K562 (cell line): ENCODE measurements at regions of chr2 and their contacts with region 1.

Region 1: GRCh38 chr2:11967946-11968465 is 221.6 kb downstream of the LPIN1 start:
- DNase-seq: peak; percentile 86 to 99 (median 92)
- ATAC-seq: peak; percentile 99
- H3K4me3 ChIP-seq: no peak overlapping the region
- H3K27ac ChIP-seq: peak overlapping the region; percentile 62
- H3K4me1 ChIP-seq: peaks cover 4 to 25% of the 10 kb centered on the region in 2 experiments; a peak in 4 of 5 replicates
- H3K27me3 ChIP-seq: no peaks in the 10 kb centered on the region
- CTCF ChIP-seq: no peak; a peak in 1 of 6 replicates
- EP300 ChIP-seq: peak; percentile 99
- POLR2A ChIP-seq: no peak
- RAD21 ChIP-seq: peak; percentile 44 to 55

Region 2: DNA sequence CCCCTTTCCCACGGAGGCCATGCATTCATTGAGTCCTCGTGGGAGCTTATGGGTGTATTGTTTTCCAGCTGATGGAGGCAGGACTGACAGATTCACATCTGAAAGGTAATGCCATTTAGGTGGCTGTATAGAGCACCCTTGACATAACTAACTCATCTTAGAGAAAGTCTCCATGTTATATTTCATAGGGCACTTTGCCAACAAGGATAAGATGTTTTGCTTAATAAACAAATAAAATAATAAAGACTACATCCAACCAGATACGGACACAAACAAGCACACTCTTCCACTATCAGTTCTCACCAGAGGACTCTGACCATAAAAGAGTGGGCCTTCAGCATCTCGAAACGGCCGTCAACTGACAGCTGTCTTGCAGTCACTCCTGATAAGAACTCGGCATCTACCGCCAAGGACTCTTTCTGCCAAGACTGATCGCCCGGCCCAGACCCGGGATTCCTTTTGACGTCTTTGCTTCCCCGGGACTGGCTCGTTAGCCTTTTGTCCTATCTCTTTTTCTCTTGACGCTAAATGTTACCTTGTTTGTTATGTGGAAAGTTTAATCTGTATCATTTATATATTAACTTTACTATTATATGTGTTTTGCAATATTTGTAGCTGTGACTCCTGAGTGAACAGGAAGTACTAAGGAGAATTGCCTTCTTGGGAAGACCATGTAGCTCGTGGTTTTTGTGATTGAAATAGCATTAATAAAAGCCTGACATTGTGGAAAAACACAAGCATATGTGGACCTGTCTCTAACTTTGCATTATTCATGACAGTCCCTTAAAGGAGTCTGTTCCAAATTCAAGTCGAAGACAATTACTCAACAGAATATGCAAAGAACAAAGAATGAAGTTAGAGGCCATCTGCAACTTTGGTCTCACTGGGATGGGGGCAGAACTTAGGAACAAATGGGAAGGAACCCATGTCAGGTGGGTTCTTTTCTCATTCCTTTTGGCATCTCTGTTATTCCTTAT is 26.5 kb before region 1 on chr2:
- CTCF ChIA-PET with region 1: no interaction called
- POLR2A ChIA-PET with region 1: interaction called, 9 read pairs
- in situ Hi-C with region 1: no loop called
- intact Hi-C with region 1: loop called (anchors 1 kb)
- DNase-seq: peak; percentile 85 to 95 (median 91)
- ATAC-seq: peak; percentile 95
- H3K4me3 ChIP-seq: no peak overlapping the region
- H3K27ac ChIP-seq: peak overlapping the region; percentile 74
- H3K4me1 ChIP-seq: peaks cover 9 to 44% of the 10 kb centered on the region in 2 experiments
- H3K27me3 ChIP-seq: no peaks in the 10 kb centered on the region
- CTCF ChIP-seq: no peak
- EP300 ChIP-seq: peak; percentile 99
- POLR2A ChIP-seq: no peak
- RAD21 ChIP-seq: peak; percentile 31 to 32; a peak in 3 of 4 replicates

Region 3: DNA sequence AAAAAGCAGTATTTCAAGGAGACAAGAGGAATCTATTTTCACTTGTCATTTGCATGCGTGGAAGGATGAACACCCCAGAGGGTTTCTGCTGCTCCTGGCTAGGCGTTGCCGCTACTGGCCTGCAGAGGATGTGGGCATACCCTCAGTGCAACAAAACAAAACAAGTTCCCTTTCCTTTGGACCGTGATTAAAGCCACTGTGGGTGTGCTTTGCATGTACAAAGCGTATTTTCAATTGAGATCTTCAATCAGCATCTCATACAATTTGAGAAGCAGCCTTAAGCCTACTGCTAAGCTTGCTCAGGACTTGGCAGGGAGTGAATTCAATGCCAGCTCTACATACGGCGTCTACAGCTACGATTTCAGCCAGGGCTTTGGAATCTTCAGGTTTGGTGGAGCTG is 76.9 kb after region 1 on chr2:
- CTCF ChIA-PET with region 1: interaction called, 3 read pairs
- POLR2A ChIA-PET with region 1: no interaction called
- in situ Hi-C with region 1: no loop called
- intact Hi-C with region 1: loop called (anchors 5 kb)
- DNase-seq: no peak
- ATAC-seq: no peak
- H3K4me3 ChIP-seq: no peak overlapping the region
- H3K27ac ChIP-seq: no peak overlapping the region
- H3K4me1 ChIP-seq: no peaks in the 10 kb centered on the region
- H3K27me3 ChIP-seq: no peaks in the 10 kb centered on the region
- CTCF ChIP-seq: no peak
- EP300 ChIP-seq: no peak
- POLR2A ChIP-seq: no peak
- RAD21 ChIP-seq: no peak

Region 4: DNA sequence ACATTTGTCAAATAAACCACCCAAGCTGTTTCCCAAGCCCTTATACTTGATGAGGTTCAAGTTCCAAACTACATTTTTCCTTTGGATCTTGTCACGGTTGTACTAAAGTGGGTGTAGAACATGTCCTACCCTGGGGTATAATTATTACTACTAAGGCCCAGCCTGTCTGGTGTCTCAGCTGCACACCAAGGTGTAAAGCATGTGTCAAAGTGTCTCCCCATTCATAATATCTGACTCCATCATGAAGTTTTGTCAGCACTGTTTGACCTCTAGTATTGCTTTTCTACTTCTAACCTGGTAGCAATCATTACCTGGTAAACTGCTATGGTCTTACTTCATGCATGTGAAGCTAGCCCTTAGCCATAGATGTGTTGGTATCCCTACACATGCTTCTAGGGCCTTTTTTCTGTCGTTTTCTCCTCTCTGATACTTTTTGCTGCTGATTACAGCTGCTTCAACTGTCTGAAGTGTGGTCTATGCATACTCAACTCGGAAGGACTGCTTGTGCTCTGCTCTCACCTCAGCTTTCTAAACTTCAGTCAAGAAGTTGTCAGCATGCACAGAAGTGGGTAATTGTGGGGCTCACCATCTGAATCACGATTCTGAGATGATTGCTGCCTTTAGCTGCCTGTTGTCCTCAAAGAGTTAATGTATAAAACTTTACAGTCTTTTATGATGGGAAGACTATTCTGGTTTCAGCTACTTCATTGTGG is 303.0 kb after region 1 on chr2:
- CTCF ChIA-PET with region 1: no interaction called
- POLR2A ChIA-PET with region 1: no interaction called
- in situ Hi-C with region 1: no loop called
- intact Hi-C with region 1: loop called (anchors 10 kb)
- DNase-seq: no peak
- ATAC-seq: peak; percentile 26
- H3K4me3 ChIP-seq: no peak overlapping the region
- H3K27ac ChIP-seq: no peak overlapping the region
- H3K4me1 ChIP-seq: peaks cover 0 to 2% of the 10 kb centered on the region in 2 experiments; a peak in 2 of 5 replicates
- H3K27me3 ChIP-seq: no peaks in the 10 kb centered on the region
- CTCF ChIP-seq: no peak
- EP300 ChIP-seq: no peak
- POLR2A ChIP-seq: no peak
- RAD21 ChIP-seq: no peak